ENCODE measurements at regions of chr13 and their contacts with region 1.

Region 1: DNA sequence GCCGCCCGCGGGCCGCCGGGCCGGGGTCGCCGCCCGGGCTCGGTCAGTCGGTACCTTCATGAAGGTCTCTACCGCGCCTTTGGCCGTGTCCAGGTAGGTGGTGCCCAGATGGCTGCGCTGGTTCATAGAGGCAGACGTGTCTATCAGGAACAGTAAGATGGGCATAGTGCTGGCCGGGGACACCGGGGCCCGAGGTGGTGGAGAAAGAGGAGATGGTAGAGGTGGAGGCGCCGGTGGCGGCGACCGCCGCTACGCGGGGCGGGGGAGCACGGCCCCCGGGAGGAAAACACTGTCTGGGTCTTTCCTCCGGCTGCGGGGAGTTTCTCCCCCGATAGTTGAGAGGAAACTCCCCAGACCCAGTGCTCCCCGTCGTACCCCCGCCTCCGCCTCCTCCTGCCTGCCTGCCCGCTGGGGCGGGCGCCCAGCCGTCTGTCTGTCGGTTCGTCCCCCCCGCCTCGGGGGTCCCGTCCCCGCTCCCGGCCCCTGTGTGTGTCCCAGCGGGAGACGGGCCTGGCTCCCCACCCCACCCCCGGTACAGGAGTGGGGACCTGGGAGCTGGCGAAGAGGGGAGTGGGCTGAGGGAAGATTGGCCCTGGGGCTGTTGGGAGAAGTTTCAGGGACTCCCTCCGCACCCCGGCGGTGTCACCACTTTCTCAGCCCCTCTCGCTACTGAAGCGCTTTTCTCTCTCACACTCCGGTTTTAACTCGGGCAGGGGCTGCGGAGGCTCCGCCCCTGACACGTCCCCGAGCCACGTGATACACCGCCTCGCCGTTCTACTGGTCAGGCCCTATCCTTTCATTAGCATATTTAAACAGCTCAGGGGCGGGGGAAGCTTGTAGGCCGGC is at the start of gene INTS6:
- DNase-seq: peak; percentile 97 to 100 (median 99)
- ATAC-seq: peak; percentile 91
- H3K4me3 ChIP-seq: peak within 1 kb of the TSS; percentile 81
- H3K4me3 Mint-ChIP-seq: peak within 1 kb of the TSS; percentile 86 to 99 (median 94)
- H3K27ac ChIP-seq: peak within 1 kb of the TSS; percentile 99
- H3K27ac Mint-ChIP-seq: peak within 1 kb of the TSS; percentile 92 to 99 (median 96)
- H3K4me1 ChIP-seq: peaks cover 27 to 32% of the 10 kb centered on the region in 2 donors
- H3K4me1 Mint-ChIP-seq: peaks cover 19 to 66% (median 45%) of the 10 kb centered on the region in 7 donors
- H3K27me3 ChIP-seq: no peaks in the 10 kb centered on the region
- H3K27me3 Mint-ChIP-seq: no peaks in the 10 kb centered on the region
- total RNA-seq, gene INTS6: 60.9 to 67.0 (median 62.7) TPM

Region 2: DNA sequence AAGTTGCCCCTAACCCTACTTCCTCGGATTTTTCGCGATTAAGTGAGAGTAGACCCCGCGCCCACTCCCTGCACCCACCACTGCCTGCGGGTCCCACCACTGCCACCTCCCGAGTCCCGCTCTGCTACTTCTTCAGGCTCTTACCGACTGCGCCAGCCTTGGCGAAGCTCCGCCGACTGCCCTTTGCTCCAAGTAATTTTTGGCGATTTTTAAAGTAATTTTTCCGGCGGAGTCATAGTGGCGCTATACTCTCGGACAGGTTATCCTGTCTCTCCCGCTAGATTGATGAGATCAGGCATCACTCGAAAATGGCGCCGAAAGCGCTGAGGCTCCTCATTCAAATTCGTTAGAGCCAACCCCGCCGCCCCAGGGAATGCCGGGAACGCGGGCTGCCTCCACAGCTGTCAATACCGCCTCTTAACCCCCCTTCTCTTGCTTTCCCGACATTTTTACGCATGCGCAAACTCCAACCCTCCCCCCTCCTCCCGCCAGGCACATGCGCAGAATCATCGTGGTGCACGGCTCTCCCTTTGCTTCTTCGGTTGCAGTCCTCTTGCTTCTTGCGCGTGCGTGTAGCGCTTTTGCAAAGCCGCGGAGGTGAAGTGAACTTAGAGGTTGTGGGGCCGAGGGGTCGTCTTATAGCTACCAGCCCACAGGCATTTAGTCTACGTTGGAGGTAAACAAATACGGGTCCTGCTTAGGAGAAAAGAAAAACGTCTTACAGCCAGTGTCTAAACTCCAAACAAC is 1370.7 kb before region 1 on chr13:
- CTCF ChIA-PET with region 1: no interaction called
- POLR2A ChIA-PET with region 1: no interaction called
- intact Hi-C with region 1: loop called (anchors 1 to 2 kb)
- DNase-seq: peak; percentile 94 to 99 (median 99)
- ATAC-seq: peak; percentile 88
- H3K4me3 ChIP-seq: peak overlapping the region; percentile 63
- H3K4me3 Mint-ChIP-seq: peak overlapping the region; percentile 90 to 100 (median 95)
- H3K27ac ChIP-seq: peak overlapping the region; percentile 86
- H3K27ac Mint-ChIP-seq: peak overlapping the region; percentile 88 to 99 (median 94)
- H3K4me1 ChIP-seq: peaks cover 17% of the 10 kb centered on the region in 2 donors
- H3K4me1 Mint-ChIP-seq: peaks cover 13 to 63% (median 49%) of the 10 kb centered on the region in 7 donors
- H3K27me3 ChIP-seq: peaks cover 0 to 8% of the 10 kb centered on the region in 2 donors
- H3K27me3 Mint-ChIP-seq: peaks cover 0 to 11% (median 7%) of the 10 kb centered on the region in 5 donors

Region 3: DNA sequence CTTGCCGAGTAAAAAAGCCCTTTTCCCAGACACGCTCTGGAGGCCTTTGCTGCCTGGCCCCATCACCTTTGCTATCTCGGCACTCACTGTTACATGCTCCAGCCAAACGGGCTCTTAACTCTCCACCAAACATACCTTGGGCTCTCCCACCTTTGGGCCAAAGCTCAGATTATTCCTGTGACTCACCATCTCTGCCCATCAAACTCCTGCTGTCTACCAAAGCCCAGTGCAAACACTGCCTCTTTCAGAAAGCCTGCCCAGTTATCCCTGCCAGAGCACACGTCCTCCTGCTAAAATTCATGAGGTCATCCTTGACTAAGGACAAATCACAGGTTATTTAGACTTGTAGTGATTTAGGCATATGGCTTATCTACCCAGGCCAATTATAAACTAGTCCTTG is 161.2 kb before region 1 on chr13:
- CTCF ChIA-PET with region 1: no interaction called
- POLR2A ChIA-PET with region 1: no interaction called
- intact Hi-C with region 1: no loop called
- DNase-seq: no peak
- ATAC-seq: no peak
- H3K4me3 ChIP-seq: no peak overlapping the region
- H3K4me3 Mint-ChIP-seq: no peak overlapping the region
- H3K27ac ChIP-seq: no peak overlapping the region
- H3K27ac Mint-ChIP-seq: no peak overlapping the region
- H3K4me1 ChIP-seq: no peaks in the 10 kb centered on the region
- H3K4me1 Mint-ChIP-seq: peaks cover 0 to 3% (median 0%) of the 10 kb centered on the region in 7 donors
- H3K27me3 ChIP-seq: no peaks in the 10 kb centered on the region
- H3K27me3 Mint-ChIP-seq: peaks cover 0 to 9% (median 0%) of the 10 kb centered on the region in 5 donors

Region 4: DNA sequence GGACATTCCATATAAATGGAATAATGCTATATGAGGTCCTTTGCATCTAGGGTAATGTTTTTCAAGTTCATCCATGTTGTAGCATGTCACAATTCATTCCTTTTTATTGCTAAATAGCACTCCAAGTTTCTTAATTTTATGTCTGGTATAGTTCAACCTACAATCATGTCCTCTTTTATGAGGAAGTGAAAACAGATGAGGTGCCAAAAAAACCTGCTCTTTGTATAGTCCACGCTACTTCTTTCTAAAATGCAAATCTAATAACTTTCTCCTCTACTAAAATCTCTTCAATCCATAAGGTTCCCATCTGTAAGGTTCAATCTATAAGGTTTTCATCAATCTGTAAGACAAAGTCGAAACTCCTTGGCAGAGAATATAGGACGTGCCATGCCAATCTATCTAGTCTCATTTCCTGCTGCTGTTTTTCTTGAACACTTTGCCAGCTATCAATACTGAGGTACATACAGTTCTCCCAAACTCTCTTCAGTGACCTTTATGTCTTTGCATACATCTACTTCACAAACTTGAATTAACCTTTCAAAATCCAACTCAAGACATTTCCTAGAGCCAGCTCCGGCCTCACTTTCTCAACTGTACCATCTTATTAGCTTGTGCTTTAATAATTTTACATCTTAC is 33.5 kb before region 1 on chr13:
- CTCF ChIA-PET with region 1: no interaction called
- POLR2A ChIA-PET with region 1: interaction called, 25 read pairs
- intact Hi-C with region 1: loop called in 1 of 2 experiments (anchors 5 kb)
- DNase-seq: no peak
- ATAC-seq: no peak
- H3K4me3 ChIP-seq: no peak overlapping the region
- H3K4me3 Mint-ChIP-seq: peak overlapping the region in 8 of 10 donors; percentile 5 to 70 (median 62)
- H3K27ac ChIP-seq: no peak overlapping the region
- H3K27ac Mint-ChIP-seq: peak overlapping the region; percentile 2 to 75 (median 65)
- H3K4me1 ChIP-seq: peaks cover 17 to 44% of the 10 kb centered on the region in 2 donors
- H3K4me1 Mint-ChIP-seq: peaks cover 50 to 90% (median 82%) of the 10 kb centered on the region in 7 donors
- H3K27me3 ChIP-seq: no peaks in the 10 kb centered on the region
- H3K27me3 Mint-ChIP-seq: no peaks in the 10 kb centered on the region

Region 5: DNA sequence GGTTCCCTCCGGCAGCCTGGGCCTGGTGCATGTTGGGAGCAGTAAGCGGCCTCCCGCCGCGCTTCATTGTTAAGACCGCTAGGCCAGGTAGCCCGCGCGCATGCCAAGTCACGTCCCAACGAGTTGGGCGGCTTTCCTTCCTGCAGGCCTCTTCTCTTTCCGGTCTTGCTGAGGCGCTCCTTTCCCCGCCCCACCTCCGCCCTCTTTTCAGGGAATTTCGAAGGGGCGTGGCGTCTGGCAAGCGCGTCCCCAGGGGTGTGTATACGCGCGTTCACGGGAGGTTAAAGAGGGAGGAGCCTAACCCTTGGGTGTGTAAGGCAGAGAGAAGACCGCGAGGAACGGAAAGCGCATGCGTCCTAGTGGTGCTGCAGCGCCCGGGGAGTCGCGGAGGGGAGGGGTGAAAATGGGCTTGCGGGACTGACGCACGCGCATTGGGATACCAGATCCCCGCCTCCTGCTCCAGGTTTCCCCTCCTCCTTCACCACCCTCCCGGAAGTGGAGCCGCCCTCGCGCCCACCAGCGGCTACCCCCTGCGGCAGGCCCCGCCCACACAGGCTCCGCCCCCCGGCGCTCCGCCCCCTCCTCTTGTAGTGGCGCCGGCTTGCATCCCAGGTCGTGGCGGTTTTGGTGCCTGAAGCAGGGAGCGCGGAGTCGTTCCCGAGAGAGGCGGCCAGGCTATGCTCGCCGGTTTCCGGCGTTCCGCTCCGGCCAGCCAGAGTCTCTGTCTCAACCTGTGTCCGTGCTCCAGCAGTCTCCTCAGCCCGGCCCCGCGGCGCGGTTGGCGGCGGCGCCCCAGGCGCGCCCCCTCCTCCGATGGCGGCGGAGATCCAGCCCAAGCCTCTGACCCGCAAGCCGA is 131.5 kb after region 1 on chr13 and contains the start of gene WDFY2:
- CTCF ChIA-PET with region 1: interaction called, 10 read pairs
- POLR2A ChIA-PET with region 1: interaction called, 86 read pairs
- intact Hi-C with region 1: loop called (anchors 1 kb)
- DNase-seq: peak; percentile 99 to 100 (median 100)
- ATAC-seq: peak; percentile 92
- H3K4me3 ChIP-seq: peak within 1 kb of the TSS; percentile 95
- H3K4me3 Mint-ChIP-seq: peak within 1 kb of the TSS; percentile 85 to 100 (median 98)
- H3K27ac ChIP-seq: peak within 1 kb of the TSS; percentile 88
- H3K27ac Mint-ChIP-seq: peak within 1 kb of the TSS; percentile 95 to 100 (median 98)
- H3K4me1 ChIP-seq: peaks cover 12 to 17% of the 10 kb centered on the region in 2 donors
- H3K4me1 Mint-ChIP-seq: peaks cover 26 to 47% (median 35%) of the 10 kb centered on the region in 7 donors
- H3K27me3 ChIP-seq: no peaks in the 10 kb centered on the region
- H3K27me3 Mint-ChIP-seq: peaks cover 0 to 3% (median 0%) of the 10 kb centered on the region in 5 donors
- total RNA-seq, gene WDFY2: 13.3 to 44.3 (median 21.1) TPM

Region 6: DNA sequence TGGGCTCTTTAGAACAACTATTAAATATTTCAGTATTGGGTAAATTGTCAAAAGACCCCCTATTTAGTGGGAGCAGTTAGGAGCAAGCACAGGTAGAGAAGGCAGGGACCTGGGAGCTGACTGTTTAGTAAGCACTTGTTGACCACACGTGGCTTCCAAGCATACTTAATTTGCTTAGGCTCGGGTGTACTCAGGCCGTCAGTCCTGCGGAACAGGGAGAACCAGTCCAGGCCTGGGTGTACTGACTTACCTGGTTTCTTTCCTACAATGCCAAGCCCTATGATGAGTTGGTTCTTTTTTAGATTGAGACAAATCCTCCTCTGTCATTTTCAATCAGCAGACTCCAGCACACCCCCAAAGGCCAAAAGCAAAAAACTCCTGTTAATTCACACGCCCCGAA is 221.7 kb after region 1 on chr13:
- CTCF ChIA-PET with region 1: no interaction called
- POLR2A ChIA-PET with region 1: no interaction called
- intact Hi-C with region 1: no loop called
- DNase-seq: no peak
- ATAC-seq: no peak
- H3K4me3 ChIP-seq: no peak overlapping the region
- H3K4me3 Mint-ChIP-seq: no peak overlapping the region
- H3K27ac ChIP-seq: no peak overlapping the region
- H3K27ac Mint-ChIP-seq: no peak overlapping the region
- H3K4me1 ChIP-seq: no peaks in the 10 kb centered on the region
- H3K4me1 Mint-ChIP-seq: peaks cover 2 to 27% (median 13%) of the 10 kb centered on the region in 7 donors
- H3K27me3 ChIP-seq: no peaks in the 10 kb centered on the region
- H3K27me3 Mint-ChIP-seq: no peaks in the 10 kb centered on the region

Region 7: GRCh38 chr13:51797664-51798488 is 345.3 kb after region 1 on chr13:
- CTCF ChIA-PET with region 1: interaction called, 5 read pairs
- POLR2A ChIA-PET with region 1: interaction called, 130 read pairs
- intact Hi-C with region 1: loop called (anchors 1 kb)
- DNase-seq: peak in 8 of 9 donors; percentile 41 to 78 (median 66)
- ATAC-seq: peak; percentile 64
- H3K4me3 ChIP-seq: no peak overlapping the region
- H3K4me3 Mint-ChIP-seq: peak overlapping the region in 1 of 10 donors; percentile 13
- H3K27ac ChIP-seq: no peak overlapping the region
- H3K27ac Mint-ChIP-seq: peak overlapping the region in 8 of 9 donors; percentile 22 to 90 (median 69)
- H3K4me1 ChIP-seq: peaks cover 15% of the 10 kb centered on the region in 2 donors
- H3K4me1 Mint-ChIP-seq: peaks cover 19 to 42% (median 35%) of the 10 kb centered on the region in 7 donors
- H3K27me3 ChIP-seq: no peaks in the 10 kb centered on the region
- H3K27me3 Mint-ChIP-seq: no peaks in the 10 kb centered on the region

Region 8: DNA sequence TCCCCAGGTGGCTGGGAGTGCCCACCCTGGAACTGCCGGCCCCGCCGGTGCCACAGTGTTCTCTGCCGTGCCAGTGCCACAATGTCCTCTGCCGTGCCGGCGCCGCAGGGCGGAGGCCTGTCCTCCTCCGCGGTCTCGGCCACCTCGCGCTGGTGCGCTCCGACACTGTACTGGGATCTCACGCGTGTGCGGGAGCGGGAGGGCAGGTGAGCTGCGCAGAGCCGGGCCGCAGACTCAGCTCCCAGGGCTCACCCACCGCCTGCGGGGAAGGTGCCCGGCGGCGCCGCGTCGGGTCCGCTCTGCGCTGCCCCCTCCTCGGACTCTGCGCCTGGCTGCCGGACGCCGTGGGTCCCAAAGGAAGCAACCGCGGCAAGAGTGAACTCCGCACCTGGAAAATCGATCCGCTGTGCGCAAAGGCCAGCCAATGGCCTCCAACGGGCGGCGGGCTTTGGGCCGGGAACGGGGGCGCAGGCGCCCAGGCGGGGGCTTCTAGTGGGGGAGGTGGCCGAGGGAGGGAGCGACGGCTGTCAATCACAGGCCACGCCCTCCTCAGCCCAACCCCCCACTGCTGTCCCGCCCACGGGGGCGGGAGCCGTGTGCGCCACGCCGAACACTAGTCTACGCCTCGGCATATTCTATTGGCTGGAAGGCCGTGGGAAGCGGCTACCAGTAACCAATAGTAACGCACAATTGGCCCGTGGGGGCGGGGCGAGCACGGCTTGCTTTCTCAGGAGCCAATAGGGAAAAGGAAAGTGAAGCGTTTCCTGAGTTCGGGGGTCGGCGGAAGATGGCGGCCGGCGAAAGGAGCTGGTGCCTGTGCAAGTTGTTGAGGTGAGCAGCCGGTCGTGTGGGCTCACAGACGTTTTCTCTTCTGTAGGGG is 559.3 kb after region 1 on chr13 and contains the start of gene ALG11:
- CTCF ChIA-PET with region 1: no interaction called
- POLR2A ChIA-PET with region 1: interaction called, 6 read pairs
- intact Hi-C with region 1: loop called (anchors 1 kb)
- DNase-seq: peak; percentile 98 to 100 (median 99)
- ATAC-seq: peak; percentile 100
- H3K4me3 ChIP-seq: peak within 1 kb of the TSS; percentile 92
- H3K4me3 Mint-ChIP-seq: peak within 1 kb of the TSS; percentile 90 to 100 (median 99)
- H3K27ac ChIP-seq: peak within 1 kb of the TSS; percentile 76
- H3K27ac Mint-ChIP-seq: peak within 1 kb of the TSS; percentile 88 to 99 (median 95)
- H3K4me1 ChIP-seq: peaks cover 9 to 16% of the 10 kb centered on the region in 2 donors
- H3K4me1 Mint-ChIP-seq: peaks cover 19 to 45% (median 29%) of the 10 kb centered on the region in 7 donors
- H3K27me3 ChIP-seq: no peaks in the 10 kb centered on the region
- H3K27me3 Mint-ChIP-seq: peaks cover 14 to 38% (median 23%) of the 10 kb centered on the region in 5 donors
- total RNA-seq, gene ALG11: 29.3 to 45.6 (median 38.3) TPM

Region 9: DNA sequence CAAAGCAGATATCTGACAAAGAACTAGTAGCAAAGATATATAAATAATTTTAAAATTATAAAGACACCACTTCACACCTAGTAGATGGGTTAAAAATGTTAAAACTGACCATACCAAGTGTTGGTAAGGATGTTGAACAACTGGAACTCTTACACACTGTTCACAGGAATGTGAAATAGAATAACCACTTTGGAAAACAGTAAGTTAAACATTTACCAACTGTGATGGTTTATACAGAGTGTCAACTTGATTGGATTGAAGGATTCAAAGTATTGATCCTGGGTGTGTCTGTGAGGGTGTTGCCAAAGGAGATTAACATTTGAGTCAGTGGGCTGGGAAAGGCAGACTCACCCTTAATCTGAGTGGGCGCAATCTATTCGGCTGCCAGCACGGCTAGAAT is 591.1 kb after region 1 on chr13:
- CTCF ChIA-PET with region 1: no interaction called
- POLR2A ChIA-PET with region 1: no interaction called
- intact Hi-C with region 1: no loop called
- DNase-seq: no peak
- ATAC-seq: no peak
- H3K4me3 ChIP-seq: no peak overlapping the region
- H3K4me3 Mint-ChIP-seq: no peak overlapping the region
- H3K27ac ChIP-seq: no peak overlapping the region
- H3K27ac Mint-ChIP-seq: no peak overlapping the region
- H3K4me1 ChIP-seq: no peaks in the 10 kb centered on the region
- H3K4me1 Mint-ChIP-seq: no peaks in the 10 kb centered on the region
- H3K27me3 ChIP-seq: no peaks in the 10 kb centered on the region
- H3K27me3 Mint-ChIP-seq: no peaks in the 10 kb centered on the region

Region 10: GRCh38 chr13:52652196-52652979 is 1199.8 kb after region 1 on chr13 and contains the start of gene SUGT1:
- CTCF ChIA-PET with region 1: no interaction called
- POLR2A ChIA-PET with region 1: interaction called, 9 read pairs
- intact Hi-C with region 1: loop called (anchors 1 kb)
- DNase-seq: peak; percentile 90 to 97 (median 95)
- ATAC-seq: peak; percentile 96
- H3K4me3 ChIP-seq: peak within 1 kb of the TSS; percentile 87
- H3K4me3 Mint-ChIP-seq: no peak within 1 kb of the TSS
- H3K27ac ChIP-seq: peak within 1 kb of the TSS; percentile 94
- H3K27ac Mint-ChIP-seq: no peak within 1 kb of the TSS
- H3K4me1 ChIP-seq: peaks cover 17 to 22% of the 10 kb centered on the region in 2 donors
- H3K4me1 Mint-ChIP-seq: peaks cover 6 to 18% (median 13%) of the 10 kb centered on the region in 7 donors
- H3K27me3 ChIP-seq: no peaks in the 10 kb centered on the region
- H3K27me3 Mint-ChIP-seq: no peaks in the 10 kb centered on the region
- total RNA-seq, gene SUGT1: 21.3 to 49.0 (median 33.8) TPM